ENCODE measurements at regions of chr2 and their contacts with region 1.

Region 1: GRCh38 chr2:233443468-233444183 is 89.3 kb downstream of the DGKD start:
- DNase-seq: peak; percentile 86
- H3K4me3 ChIP-seq: no peak overlapping the region
- H3K27ac ChIP-seq: peak overlapping the region; percentile 43
- H3K4me1 ChIP-seq: peaks cover 3% of the 10 kb centered on the region
- H3K27me3 ChIP-seq: no peaks in the 10 kb centered on the region
- CTCF ChIP-seq: peak; percentile 85

Region 2: DNA sequence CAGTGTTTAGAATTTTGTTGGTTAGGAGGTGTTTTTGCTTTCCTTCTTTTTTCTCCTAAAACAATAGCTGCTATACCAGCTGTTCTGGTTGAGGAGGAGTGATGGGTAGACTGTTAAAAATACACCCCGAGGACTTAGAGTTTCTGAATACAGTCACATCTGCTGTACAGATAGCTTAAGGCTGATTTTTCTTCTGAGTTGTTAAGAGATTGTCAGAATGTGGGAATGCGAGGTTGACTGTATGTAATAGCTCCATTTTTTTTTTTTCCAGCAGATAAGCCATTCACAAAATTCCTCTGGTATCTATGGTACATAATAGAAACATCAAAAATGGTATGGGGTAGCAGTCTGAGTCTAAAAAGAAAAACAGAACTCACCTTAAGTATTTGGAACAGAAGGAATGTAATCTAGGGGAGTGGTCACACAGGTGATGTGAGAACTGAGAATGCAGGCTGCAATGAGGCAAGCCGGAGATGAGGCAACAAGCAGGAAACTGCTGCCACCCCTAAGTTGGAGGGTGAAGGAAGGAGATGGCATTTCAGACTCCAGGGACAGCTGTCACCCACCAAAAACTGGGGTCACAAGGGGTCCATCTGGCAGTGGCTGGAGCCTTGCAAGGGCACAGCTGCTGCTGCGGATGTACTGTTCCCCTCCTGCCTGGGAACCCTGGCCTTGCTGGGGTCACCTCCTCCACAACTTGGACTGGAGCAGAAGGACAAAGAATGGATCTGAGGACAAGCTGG is 86.9 kb before region 1 on chr2:
- CTCF ChIA-PET with region 1: interaction called, 3 read pairs
- POLR2A ChIA-PET with region 1: no interaction called
- intact Hi-C with region 1: loop called (anchors 2 kb)
- DNase-seq: no peak
- H3K4me3 ChIP-seq: no peak overlapping the region
- H3K27ac ChIP-seq: no peak overlapping the region
- H3K4me1 ChIP-seq: peaks cover 31% of the 10 kb centered on the region
- H3K27me3 ChIP-seq: no peaks in the 10 kb centered on the region
- CTCF ChIP-seq: no peak

Region 3: GRCh38 chr2:233404222-233404621 is 39.4 kb before region 1 on chr2:
- CTCF ChIA-PET with region 1: interaction called, 5 read pairs
- POLR2A ChIA-PET with region 1: no interaction called
- intact Hi-C with region 1: loop called (anchors 1 kb)
- DNase-seq: peak; percentile 66
- H3K4me3 ChIP-seq: no peak overlapping the region
- H3K27ac ChIP-seq: no peak overlapping the region
- H3K4me1 ChIP-seq: peaks cover 15% of the 10 kb centered on the region
- H3K27me3 ChIP-seq: no peaks in the 10 kb centered on the region
- CTCF ChIP-seq: peak; percentile 79

Measured in A673 (cell line).